ENCODE measurements at regions of chr3 and their contacts with region 1.

Region 1: GRCh38 chr3:124671106-124671505 is 59.1 kb upstream of the UMPS start:
- DNase-seq: peak in 1 of 2 donors; percentile 66
- ATAC-seq: peak; percentile 85 to 97 (median 93)
- H3K4me3 ChIP-seq: no peak overlapping the region
- H3K4me3 Mint-ChIP-seq: peak overlapping the region; percentile 74
- H3K27ac ChIP-seq: peak overlapping the region; percentile 68
- H3K27ac Mint-ChIP-seq: peak overlapping the region; percentile 65 to 82
- H3K4me1 ChIP-seq: peaks cover 28% of the 10 kb centered on the region
- H3K4me1 Mint-ChIP-seq: peaks cover 33 to 39% of the 10 kb centered on the region in 2 donors
- H3K27me3 ChIP-seq: no peaks in the 10 kb centered on the region
- H3K27me3 Mint-ChIP-seq: no peaks in the 10 kb centered on the region
- CTCF ChIP-seq: no peak

Region 2: GRCh38 chr3:124652009-124652408 is 19.1 kb before region 1 on chr3:
- intact Hi-C with region 1: loop called (anchors 1 kb)
- DNase-seq: peak in 1 of 2 donors; percentile 9
- ATAC-seq: peak; percentile 78 to 84 (median 80)
- H3K4me3 ChIP-seq: no peak overlapping the region
- H3K4me3 Mint-ChIP-seq: peak overlapping the region; percentile 49
- H3K27ac ChIP-seq: peak overlapping the region; percentile 54
- H3K27ac Mint-ChIP-seq: peak overlapping the region; percentile 45 to 57
- H3K4me1 ChIP-seq: peaks cover 22% of the 10 kb centered on the region
- H3K4me1 Mint-ChIP-seq: peaks cover 47 to 53% of the 10 kb centered on the region in 2 donors
- H3K27me3 ChIP-seq: no peaks in the 10 kb centered on the region
- H3K27me3 Mint-ChIP-seq: peaks cover 5 to 7% of the 10 kb centered on the region in 2 donors
- CTCF ChIP-seq: no peak

Measured in natural killer cell (primary cell).